ENCODE measurements at regions of chr3 and their contacts with region 1.

Region 1: DNA sequence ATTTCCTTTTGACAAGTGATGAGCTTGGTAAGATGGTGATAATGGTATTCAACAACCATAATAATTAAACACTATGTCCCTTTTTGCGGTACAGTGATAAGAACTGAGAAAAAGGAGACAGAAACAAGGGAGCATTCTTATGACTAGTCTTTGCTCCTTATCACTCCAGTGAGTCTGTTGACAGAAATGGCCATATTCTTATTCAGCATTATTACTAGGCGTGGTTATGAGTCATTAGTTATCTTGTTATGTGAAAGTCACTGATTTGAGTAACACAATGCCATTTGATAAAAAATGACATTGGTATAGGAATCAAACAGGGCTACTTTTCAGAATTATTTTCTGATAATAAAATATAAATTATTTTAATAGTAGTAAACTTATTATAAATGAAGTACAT is 193.5 kb downstream of the C3orf38 start:
- DNase-seq: no peak
- ATAC-seq: no peak
- H3K4me3 ChIP-seq: no peak overlapping the region
- H3K27ac ChIP-seq: no peak overlapping the region
- H3K4me1 ChIP-seq: no peaks in the 10 kb centered on the region
- H3K27me3 ChIP-seq: no peaks in the 10 kb centered on the region
- CTCF ChIP-seq: no peak

Region 2: GRCh38 chr3:88321363-88322051 is 21.8 kb before region 1 on chr3:
- intact Hi-C with region 1: loop called in 1 of 10 experiments (anchors 1 kb)
- DNase-seq: no peak
- ATAC-seq: no peak
- H3K4me3 ChIP-seq: no peak overlapping the region
- H3K27ac ChIP-seq: no peak overlapping the region
- H3K4me1 ChIP-seq: no peaks in the 10 kb centered on the region
- H3K27me3 ChIP-seq: no peaks in the 10 kb centered on the region
- CTCF ChIP-seq: no peak

Region 3: GRCh38 chr3:88418219-88418618 is 75.0 kb after region 1 on chr3:
- intact Hi-C with region 1: no loop called
- DNase-seq: no peak
- ATAC-seq: no peak
- H3K4me3 ChIP-seq: no peak overlapping the region
- H3K27ac ChIP-seq: no peak overlapping the region
- H3K4me1 ChIP-seq: no peaks in the 10 kb centered on the region
- H3K27me3 ChIP-seq: no peaks in the 10 kb centered on the region
- CTCF ChIP-seq: no peak

Measured in heart right ventricle (tissue), 16 donors.